CD4-positive, alpha-beta T cell (primary cell): ENCODE measurements at regions of chr12 and their contacts with region 1.

Region 1: DNA sequence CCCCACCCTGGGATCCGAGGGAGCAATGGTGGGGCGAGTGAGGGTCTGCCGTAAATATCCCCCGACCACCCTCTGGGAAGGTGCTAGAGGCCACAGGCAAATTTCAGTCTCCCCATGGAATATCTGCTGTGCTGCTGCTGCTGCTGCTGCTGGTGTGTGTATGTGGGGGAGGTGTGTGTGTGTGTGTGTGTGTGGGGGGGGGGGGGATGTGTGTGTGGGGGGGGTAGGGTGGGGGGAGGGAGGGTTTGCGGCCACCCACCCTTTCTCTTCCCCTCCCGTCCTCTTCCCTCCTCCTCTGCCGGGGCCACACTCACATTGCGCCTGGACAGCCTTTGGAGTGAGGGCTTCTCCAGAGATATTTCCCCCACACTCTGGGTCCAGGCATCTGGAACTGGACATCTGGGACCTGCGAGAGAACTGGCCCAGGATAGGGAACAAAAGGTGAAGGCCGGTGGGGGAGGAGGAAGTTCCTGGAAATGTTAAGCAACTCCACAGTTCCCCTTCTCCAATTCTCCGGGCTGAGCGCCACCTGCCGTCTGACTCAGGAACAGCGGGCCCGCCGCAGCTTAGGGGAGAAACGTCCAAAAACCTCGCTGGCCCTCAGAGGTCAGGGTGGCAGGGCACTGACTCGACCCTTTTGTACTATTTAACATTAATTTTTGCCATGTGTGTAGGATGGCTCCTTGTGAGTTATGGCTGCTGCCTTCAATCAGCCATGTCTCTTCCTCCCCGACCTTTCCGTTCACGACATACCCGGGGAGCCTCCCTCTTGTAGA is at the start of gene C1RL:
- DNase-seq: peak; percentile 55 to 85 (median 76)
- ATAC-seq: peak; percentile 48
- H3K4me3 ChIP-seq: peak within 1 kb of the TSS; percentile 70
- H3K4me3 Mint-ChIP-seq: peak within 1 kb of the TSS; percentile 93
- H3K27ac ChIP-seq: peak within 1 kb of the TSS; percentile 79 to 80
- H3K27ac Mint-ChIP-seq: peak within 1 kb of the TSS; percentile 93
- H3K4me1 ChIP-seq: peaks cover 43% of the 10 kb centered on the region
- H3K4me1 Mint-ChIP-seq: peaks cover 46% of the 10 kb centered on the region
- H3K27me3 ChIP-seq: no peaks in the 10 kb centered on the region
- H3K27me3 Mint-ChIP-seq: no peaks in the 10 kb centered on the region
- CTCF ChIP-seq: peak; percentile 95
- total RNA-seq, gene C1RL: 12.2 to 14.1 TPM

Region 2: GRCh38 chr12:6867413-6868210 is 241.4 kb before region 1 on chr12 and contains the start of gene TPI1:
- CTCF ChIA-PET with region 1: interaction called, 16 read pairs
- POLR2A ChIA-PET with region 1: interaction called, 23 read pairs
- intact Hi-C with region 1: loop called (anchors 1 to 2 kb)
- DNase-seq: peak; percentile 55 to 88 (median 72)
- ATAC-seq: peak; percentile 64
- H3K4me3 ChIP-seq: peak within 1 kb of the TSS; percentile 68
- H3K4me3 Mint-ChIP-seq: peak within 1 kb of the TSS; percentile 94
- H3K27ac ChIP-seq: peak within 1 kb of the TSS; percentile 73 to 78
- H3K27ac Mint-ChIP-seq: peak within 1 kb of the TSS; percentile 80
- H3K4me1 ChIP-seq: peaks cover 53% of the 10 kb centered on the region
- H3K4me1 Mint-ChIP-seq: peaks cover 56% of the 10 kb centered on the region
- H3K27me3 ChIP-seq: no peaks in the 10 kb centered on the region
- H3K27me3 Mint-ChIP-seq: no peaks in the 10 kb centered on the region
- CTCF ChIP-seq: no peak
- total RNA-seq, gene TPI1: 46.8 to 48.7 TPM

Region 3: GRCh38 chr12:6921996-6922946 is 186.7 kb before region 1 on chr12:
- CTCF ChIA-PET with region 1: interaction called, 3 read pairs
- POLR2A ChIA-PET with region 1: interaction called, 3 read pairs
- intact Hi-C with region 1: loop called (anchors 1 kb)
- DNase-seq: no peak
- ATAC-seq: no peak
- H3K4me3 ChIP-seq: no peak overlapping the region
- H3K4me3 Mint-ChIP-seq: no peak overlapping the region
- H3K27ac ChIP-seq: no peak overlapping the region
- H3K27ac Mint-ChIP-seq: no peak overlapping the region
- H3K4me1 ChIP-seq: peaks cover 21% of the 10 kb centered on the region
- H3K4me1 Mint-ChIP-seq: peaks cover 24% of the 10 kb centered on the region
- H3K27me3 ChIP-seq: no peaks in the 10 kb centered on the region
- H3K27me3 Mint-ChIP-seq: no peaks in the 10 kb centered on the region
- CTCF ChIP-seq: no peak

Region 4: DNA sequence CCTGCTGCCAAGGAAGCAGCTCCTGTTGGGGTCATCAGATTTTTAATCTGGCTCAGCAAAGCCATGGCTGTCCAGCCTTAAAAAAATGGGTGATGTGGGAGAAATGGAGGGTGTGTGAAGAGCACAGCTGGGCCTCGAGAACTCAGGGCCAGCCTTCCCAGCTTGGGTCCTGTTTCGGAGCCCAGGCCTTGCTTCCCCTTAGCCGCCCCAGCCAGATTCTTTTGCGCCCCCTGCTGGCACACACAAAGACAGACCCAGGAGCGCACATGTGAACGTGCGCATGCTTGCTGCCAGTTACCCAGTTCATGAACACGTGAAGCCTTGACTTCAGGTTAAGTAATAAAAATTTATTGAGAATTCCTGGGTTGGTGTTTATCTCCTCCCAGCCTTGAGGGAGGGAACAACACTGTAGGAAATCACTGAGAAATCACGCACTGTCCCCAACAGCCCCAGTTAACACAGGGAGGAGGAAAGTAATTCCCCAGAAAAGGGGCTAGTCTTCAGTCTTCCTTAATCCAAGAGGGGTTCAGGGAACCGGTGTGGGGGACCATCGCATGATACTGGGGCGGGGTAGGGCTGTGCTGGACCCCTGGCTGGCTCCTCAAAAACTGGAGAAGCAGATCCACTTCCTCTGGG is 143.8 kb before region 1 on chr12:
- CTCF ChIA-PET with region 1: interaction called, 4 read pairs
- POLR2A ChIA-PET with region 1: interaction called, 4 read pairs
- intact Hi-C with region 1: loop called in 1 of 2 experiments (anchors 2 kb)
- DNase-seq: peak; percentile 83 to 96 (median 86)
- ATAC-seq: peak; percentile 50
- H3K4me3 ChIP-seq: no peak overlapping the region
- H3K4me3 Mint-ChIP-seq: peak overlapping the region; percentile 79
- H3K27ac ChIP-seq: peak overlapping the region; percentile 38 to 39
- H3K27ac Mint-ChIP-seq: peak overlapping the region; percentile 90
- H3K4me1 ChIP-seq: peaks cover 70% of the 10 kb centered on the region
- H3K4me1 Mint-ChIP-seq: peaks cover 58% of the 10 kb centered on the region
- H3K27me3 ChIP-seq: no peaks in the 10 kb centered on the region
- H3K27me3 Mint-ChIP-seq: no peaks in the 10 kb centered on the region
- CTCF ChIP-seq: peak; percentile 94

Region 5: DNA sequence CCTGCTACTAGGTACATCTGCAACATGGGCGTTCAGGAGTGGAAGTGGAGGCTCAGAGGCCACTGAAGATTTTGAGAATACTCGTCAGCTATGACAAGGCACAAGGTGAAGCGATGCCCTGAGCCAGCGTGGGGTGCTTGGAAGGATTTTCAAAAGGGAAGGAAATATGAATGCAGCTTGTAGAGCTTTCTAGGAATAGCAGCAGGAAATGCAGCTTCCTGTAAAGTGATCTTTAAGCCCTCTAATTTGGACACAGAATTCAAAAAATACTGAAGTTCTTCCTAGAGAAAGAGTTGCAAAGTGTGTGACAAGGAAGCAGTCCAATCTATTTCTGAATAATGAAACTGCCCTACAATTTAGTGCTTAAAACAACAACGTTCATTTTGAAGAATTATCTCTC is 61.7 kb before region 1 on chr12:
- CTCF ChIA-PET with region 1: no interaction called
- POLR2A ChIA-PET with region 1: no interaction called
- intact Hi-C with region 1: no loop called
- DNase-seq: no peak
- ATAC-seq: no peak
- H3K4me3 ChIP-seq: no peak overlapping the region
- H3K4me3 Mint-ChIP-seq: no peak overlapping the region
- H3K27ac ChIP-seq: no peak overlapping the region
- H3K27ac Mint-ChIP-seq: no peak overlapping the region
- H3K4me1 ChIP-seq: peaks cover 12% of the 10 kb centered on the region
- H3K4me1 Mint-ChIP-seq: peaks cover 11% of the 10 kb centered on the region
- H3K27me3 ChIP-seq: no peaks in the 10 kb centered on the region
- H3K27me3 Mint-ChIP-seq: no peaks in the 10 kb centered on the region
- CTCF ChIP-seq: no peak

Region 6: DNA sequence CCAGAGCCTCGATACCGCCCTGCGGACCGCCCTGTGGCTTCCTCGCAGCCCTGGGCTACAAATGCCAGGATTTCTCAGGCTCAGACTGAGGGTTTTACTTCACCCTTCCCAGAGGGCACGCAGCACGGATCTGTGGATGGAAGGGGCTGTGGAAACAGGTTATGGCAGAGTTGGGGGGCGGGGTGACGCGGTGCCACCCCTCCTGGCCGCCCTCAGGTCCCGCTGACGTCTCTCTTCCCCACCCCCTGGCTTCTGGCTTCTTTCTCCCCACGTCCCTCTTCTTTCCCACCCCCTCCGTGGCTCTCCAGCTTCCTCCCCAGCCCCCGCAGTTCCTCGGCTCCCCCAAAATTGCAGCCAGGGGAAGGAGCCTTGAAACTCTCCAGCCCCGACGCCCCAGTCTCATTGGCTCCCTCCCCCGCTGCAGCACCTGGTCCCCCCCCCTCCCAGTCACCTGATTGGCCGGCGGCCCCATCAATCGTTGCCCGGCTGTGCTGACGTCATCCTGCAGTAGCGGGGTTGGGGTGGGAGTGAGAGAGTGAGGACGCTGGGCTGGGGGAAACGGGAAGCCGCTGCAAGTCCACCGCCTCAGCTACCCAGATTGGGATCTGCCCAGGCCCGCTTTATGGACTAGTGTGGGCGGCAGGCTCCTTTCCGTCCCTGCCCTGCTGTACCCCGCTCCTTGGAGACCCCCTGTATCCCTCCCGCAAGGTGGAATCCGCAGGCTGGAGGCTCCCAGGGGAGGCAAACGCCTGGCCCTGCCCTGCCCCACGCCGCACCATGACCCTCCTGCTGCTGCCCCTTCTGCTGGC is 21.1 kb after region 1 on chr12 and contains the start of gene CLSTN3:
- CTCF ChIA-PET with region 1: interaction called, 3 read pairs
- POLR2A ChIA-PET with region 1: interaction called, 16 read pairs
- intact Hi-C with region 1: no loop called
- DNase-seq: peak; percentile 77 to 94 (median 84)
- ATAC-seq: peak; percentile 89
- H3K4me3 ChIP-seq: peak within 1 kb of the TSS; percentile 88
- H3K4me3 Mint-ChIP-seq: peak within 1 kb of the TSS; percentile 91
- H3K27ac ChIP-seq: peak within 1 kb of the TSS; percentile 58 to 71
- H3K27ac Mint-ChIP-seq: peak within 1 kb of the TSS; percentile 87
- H3K4me1 ChIP-seq: peaks cover 33% of the 10 kb centered on the region
- H3K4me1 Mint-ChIP-seq: peaks cover 47% of the 10 kb centered on the region
- H3K27me3 ChIP-seq: no peaks in the 10 kb centered on the region
- H3K27me3 Mint-ChIP-seq: no peaks in the 10 kb centered on the region
- CTCF ChIP-seq: no peak
- total RNA-seq, gene CLSTN3: 29.1 to 33.9 TPM

Region 7: DNA sequence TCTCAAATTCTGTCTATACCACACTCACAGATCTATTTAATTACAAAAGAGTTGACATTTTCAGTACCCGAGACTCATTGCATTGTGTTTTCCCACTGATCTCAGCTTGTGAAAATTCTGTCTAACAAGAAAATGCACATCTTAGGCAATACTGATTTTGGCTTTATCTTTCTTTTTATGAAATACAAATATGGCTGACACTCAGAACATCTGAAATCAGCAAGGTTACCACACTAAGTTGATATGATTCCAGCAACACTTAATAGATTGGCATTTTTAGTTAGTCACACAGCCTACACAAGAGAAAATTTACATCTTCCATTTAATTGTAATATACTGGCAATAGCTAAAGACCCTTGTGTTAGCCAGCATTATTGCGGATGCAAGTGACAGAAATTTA is 120.8 kb after region 1 on chr12:
- CTCF ChIA-PET with region 1: no interaction called
- POLR2A ChIA-PET with region 1: no interaction called
- intact Hi-C with region 1: no loop called
- DNase-seq: no peak
- ATAC-seq: no peak
- H3K4me3 ChIP-seq: no peak overlapping the region
- H3K4me3 Mint-ChIP-seq: no peak overlapping the region
- H3K27ac ChIP-seq: no peak overlapping the region
- H3K27ac Mint-ChIP-seq: no peak overlapping the region
- H3K4me1 ChIP-seq: no peaks in the 10 kb centered on the region
- H3K4me1 Mint-ChIP-seq: no peaks in the 10 kb centered on the region
- H3K27me3 ChIP-seq: no peaks in the 10 kb centered on the region
- H3K27me3 Mint-ChIP-seq: peaks cover 34% of the 10 kb centered on the region
- CTCF ChIP-seq: no peak

Region 8: DNA sequence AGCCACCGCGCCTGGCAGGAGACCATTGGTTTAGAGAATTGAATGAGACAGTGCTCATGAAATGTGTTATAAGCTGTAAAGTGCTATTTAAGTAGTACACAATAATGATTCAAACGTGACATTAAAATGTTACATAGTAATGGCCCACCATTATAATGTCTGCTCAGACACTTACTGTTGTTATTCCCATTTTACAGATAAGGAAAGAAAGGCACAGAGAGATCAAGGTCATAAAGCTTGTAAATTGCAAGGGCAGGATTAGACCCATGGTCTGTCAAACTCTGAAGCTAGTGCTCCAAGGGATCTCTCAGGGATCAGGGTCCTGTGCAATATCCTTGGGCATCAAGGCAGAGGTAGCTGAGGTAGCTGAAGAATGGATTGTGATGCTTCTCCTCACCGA is 201.1 kb after region 1 on chr12:
- CTCF ChIA-PET with region 1: no interaction called
- POLR2A ChIA-PET with region 1: no interaction called
- intact Hi-C with region 1: no loop called
- DNase-seq: no peak
- ATAC-seq: no peak
- H3K4me3 ChIP-seq: no peak overlapping the region
- H3K4me3 Mint-ChIP-seq: no peak overlapping the region
- H3K27ac ChIP-seq: no peak overlapping the region
- H3K27ac Mint-ChIP-seq: no peak overlapping the region
- H3K4me1 ChIP-seq: no peaks in the 10 kb centered on the region
- H3K4me1 Mint-ChIP-seq: no peaks in the 10 kb centered on the region
- H3K27me3 ChIP-seq: peaks cover 0 to 4% of the 10 kb centered on the region in 2 experiments
- H3K27me3 Mint-ChIP-seq: peaks cover 6% of the 10 kb centered on the region
- CTCF ChIP-seq: no peak